ENCODE measurements at regions of chr19 and their contacts with region 1.

Region 1: GRCh38 chr19:41965106-41965505 is 6.0 kb upstream of the RABAC1 start:
- DNase-seq: no peak
- ATAC-seq: no peak
- H3K4me3 ChIP-seq: no peak overlapping the region
- H3K27ac ChIP-seq: no peak overlapping the region
- H3K4me1 ChIP-seq: no peaks in the 10 kb centered on the region
- H3K27me3 ChIP-seq: no peaks in the 10 kb centered on the region
- CTCF ChIP-seq: no peak

Region 2: DNA sequence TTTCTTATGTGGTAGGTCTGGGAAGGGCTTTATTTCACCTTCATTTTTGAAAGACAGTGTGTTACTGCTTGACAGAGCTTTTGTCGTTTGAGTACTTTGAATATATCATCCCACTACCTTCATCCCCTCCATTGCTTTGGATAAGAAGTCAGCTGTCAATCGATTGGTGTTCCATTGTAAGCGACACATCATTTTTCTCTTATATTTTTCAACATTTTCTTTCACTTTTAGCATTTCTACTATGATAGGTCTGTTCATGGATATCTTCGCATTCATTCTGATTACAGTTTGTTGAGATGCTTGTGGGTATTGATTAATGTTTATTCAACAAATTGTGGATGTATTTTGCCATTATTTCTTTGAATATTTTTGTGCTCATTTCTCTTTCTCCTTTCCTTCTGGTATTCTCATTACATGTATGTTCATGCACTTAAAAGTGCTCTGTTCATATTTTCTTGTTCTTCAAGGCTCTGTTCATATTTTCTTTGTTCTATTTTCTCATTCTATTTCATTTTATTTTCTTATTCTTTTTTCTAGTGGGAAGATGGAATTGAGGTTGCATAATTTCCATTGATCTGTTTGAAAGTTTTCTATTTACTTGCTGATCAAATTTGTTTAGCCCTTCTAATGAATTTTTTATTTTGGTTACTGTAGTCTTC is 1939.0 kb before region 1 on chr19:
- CTCF ChIA-PET with region 1: no interaction called
- POLR2A ChIA-PET with region 1: no interaction called
- in situ Hi-C with region 1: no loop called
- intact Hi-C with region 1: no loop called
- DNase-seq: no peak
- ATAC-seq: no peak
- H3K4me3 ChIP-seq: no peak overlapping the region
- H3K27ac ChIP-seq: no peak overlapping the region
- H3K4me1 ChIP-seq: no peaks in the 10 kb centered on the region
- H3K27me3 ChIP-seq: no peaks in the 10 kb centered on the region
- CTCF ChIP-seq: no peak

Region 3: DNA sequence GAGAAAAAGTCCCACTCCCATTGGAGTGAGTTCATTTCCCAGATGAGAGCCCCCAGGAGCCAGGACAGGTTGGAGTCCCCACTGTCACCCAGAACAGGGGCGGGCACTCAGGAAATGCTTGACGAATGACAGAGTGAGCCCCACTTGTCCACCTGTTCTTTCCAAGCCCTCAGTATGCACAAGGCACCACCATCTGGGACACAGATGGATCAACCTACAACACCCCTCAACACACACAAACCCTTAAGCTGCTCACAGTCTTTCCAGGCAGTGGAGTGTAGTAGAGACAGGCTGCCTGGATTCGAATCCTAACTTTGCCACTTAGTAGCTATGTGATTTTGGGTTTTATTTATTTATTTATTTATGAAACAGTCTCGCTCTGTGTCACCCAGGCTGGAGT is 74.2 kb before region 1 on chr19:
- CTCF ChIA-PET with region 1: interaction called, 10 read pairs
- POLR2A ChIA-PET with region 1: no interaction called
- in situ Hi-C with region 1: no loop called
- intact Hi-C with region 1: no loop called
- DNase-seq: no peak
- ATAC-seq: no peak
- H3K4me3 ChIP-seq: no peak overlapping the region
- H3K27ac ChIP-seq: no peak overlapping the region
- H3K4me1 ChIP-seq: peaks cover 20% of the 10 kb centered on the region
- H3K27me3 ChIP-seq: no peaks in the 10 kb centered on the region
- CTCF ChIP-seq: no peak

Region 4: GRCh38 chr19:42244347-42245220 is 279.5 kb after region 1 on chr19:
- CTCF ChIA-PET with region 1: no interaction called
- POLR2A ChIA-PET with region 1: no interaction called
- in situ Hi-C with region 1: no loop called
- intact Hi-C with region 1: no loop called
- DNase-seq: peak; percentile 86
- ATAC-seq: peak; percentile 61
- H3K4me3 ChIP-seq: peak overlapping the region; percentile 73 to 80
- H3K27ac ChIP-seq: peak overlapping the region; percentile 92
- H3K4me1 ChIP-seq: peaks cover 27% of the 10 kb centered on the region
- H3K27me3 ChIP-seq: no peaks in the 10 kb centered on the region
- CTCF ChIP-seq: peak; percentile 79

Region 5: DNA sequence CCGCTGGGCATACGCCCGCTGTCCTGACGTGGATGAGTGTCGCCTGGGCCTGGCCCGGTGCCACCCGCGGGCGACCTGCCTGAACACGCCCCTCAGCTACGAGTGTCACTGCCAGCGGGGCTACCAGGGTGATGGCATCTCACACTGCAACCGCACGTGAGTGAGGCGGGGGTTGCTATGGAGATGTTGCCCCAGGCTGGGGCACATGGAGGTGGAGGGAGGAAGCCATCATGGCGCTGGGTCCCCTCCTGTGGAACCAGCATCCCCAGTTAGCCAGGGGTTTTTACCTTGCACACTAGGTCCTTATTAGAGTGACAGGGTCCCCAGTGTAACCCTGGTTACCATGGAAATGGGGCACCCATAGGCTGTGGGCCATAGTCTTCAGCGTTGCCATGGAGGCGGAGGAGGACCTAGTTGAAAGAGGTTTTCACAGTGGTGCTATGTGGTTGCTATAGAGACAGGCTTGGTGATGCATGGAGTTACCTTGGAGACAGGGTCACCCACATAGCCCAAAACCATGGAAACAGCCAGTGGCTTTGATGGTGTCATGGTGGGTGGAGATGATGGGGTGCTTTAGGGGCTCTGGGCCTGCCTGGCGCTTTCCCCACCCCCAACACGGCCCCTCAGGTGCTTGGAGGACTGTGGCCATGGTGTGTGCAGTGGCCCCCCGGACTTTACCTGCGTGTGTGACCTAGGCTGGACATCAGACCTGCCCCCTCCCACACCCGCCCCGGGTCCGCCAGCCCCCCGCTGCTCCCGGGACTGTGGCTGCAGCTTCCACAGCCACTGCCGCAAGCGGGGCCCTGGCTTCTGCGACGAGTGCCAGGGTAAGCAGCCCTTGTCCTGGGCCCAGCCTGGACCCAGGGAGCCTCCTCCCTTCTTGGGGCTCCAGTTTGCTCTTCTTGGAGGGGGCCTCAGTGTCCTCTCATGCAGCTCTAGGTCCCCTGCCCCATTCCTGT is 387.5 kb after region 1 on chr19:
- CTCF ChIA-PET with region 1: no interaction called
- POLR2A ChIA-PET with region 1: no interaction called
- in situ Hi-C with region 1: no loop called
- intact Hi-C with region 1: no loop called
- DNase-seq: no peak
- ATAC-seq: no peak
- H3K4me3 ChIP-seq: no peak overlapping the region
- H3K27ac ChIP-seq: no peak overlapping the region
- H3K4me1 ChIP-seq: no peaks in the 10 kb centered on the region
- H3K27me3 ChIP-seq: no peaks in the 10 kb centered on the region
- CTCF ChIP-seq: no peak

Measured in Panc1 (cell line).